ENCODE measurements at regions of chr6 and their contacts with region 1.

Region 1: GRCh38 chr6:161273752-161274487 is at the start of gene AGPAT4:
- DNase-seq: peak; percentile 82
- H3K4me3 ChIP-seq: peak within 1 kb of the TSS; percentile 45
- H3K27ac ChIP-seq: peak within 1 kb of the TSS; percentile 33
- H3K4me1 ChIP-seq: no peaks in the 10 kb centered on the region
- H3K27me3 ChIP-seq: no peaks in the 10 kb centered on the region
- CTCF ChIP-seq: no peak
- total RNA-seq, gene AGPAT4: 3.6 to 9.2 TPM

Region 2: DNA sequence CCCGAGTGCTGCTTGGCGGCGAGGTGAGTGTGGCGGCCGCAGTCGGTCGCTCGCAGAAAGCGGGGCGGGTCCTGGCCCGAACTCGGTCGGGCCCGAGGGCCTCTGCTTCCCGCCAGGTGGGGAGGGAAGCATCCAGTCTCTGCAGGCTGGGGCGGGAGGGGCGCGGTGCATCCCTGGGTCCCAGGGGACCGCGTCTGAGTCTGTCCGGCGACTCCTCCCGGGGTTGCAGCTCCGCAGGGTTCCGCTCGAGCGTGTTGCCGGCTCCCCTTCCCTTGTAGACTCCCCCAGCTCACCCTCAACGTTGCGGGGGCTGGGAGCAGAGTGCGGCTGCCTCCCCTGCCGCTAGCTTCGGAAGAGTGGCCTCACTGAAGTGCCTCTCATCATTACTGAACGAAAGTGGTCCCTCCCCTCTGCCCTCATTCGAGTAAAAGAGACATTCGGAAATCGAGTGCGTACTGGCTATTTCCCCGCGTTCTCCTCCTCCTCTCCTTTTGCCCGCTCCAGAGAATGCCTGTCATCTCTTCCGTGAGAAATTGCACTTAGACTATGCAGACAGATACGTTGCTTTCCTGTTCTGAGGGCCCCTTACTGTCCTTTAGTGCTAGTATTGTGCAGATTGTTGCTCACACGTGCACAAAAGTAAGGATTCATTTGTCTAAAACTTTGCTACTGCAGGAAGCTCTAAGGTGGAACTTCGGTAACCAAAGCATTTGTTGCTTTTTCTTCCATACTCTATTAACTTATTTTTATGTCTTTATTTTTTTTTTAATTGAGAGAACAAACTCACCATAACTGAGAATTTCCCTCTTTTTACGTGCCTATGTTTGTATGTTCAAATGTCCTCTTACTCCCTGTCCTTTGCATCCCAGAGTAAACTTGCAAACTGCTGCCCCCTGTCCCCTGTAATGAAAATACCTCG is 281.6 kb before region 1 on chr6:
- intact Hi-C with region 1: loop called (anchors 10 kb)
- DNase-seq: peak; percentile 75
- H3K4me3 ChIP-seq: peak overlapping the region; percentile 97
- H3K27ac ChIP-seq: peak overlapping the region; percentile 89
- H3K4me1 ChIP-seq: no peaks in the 10 kb centered on the region
- H3K27me3 ChIP-seq: no peaks in the 10 kb centered on the region
- CTCF ChIP-seq: peak; percentile 52

Region 3: GRCh38 chr6:161367472-161367871 is 93.6 kb after region 1 on chr6:
- intact Hi-C with region 1: no loop called
- DNase-seq: peak; percentile 31
- H3K4me3 ChIP-seq: no peak overlapping the region
- H3K27ac ChIP-seq: no peak overlapping the region
- H3K4me1 ChIP-seq: no peaks in the 10 kb centered on the region
- H3K27me3 ChIP-seq: no peaks in the 10 kb centered on the region
- CTCF ChIP-seq: no peak